Activated T-helper 1 cell treated with anti-CD3 and anti-CD28 coated beads, Interleukin-12 subunit alpha, Interleukin-12 subunit beta, Interleukin-2, Interleukin-4 antibody, amounts not matched to agents 30 ng/mL and 10 ng/mL and 1 ng/mL, durations not matched to agents 14 hours and 24 hours and 36 hours (primary cell): ENCODE measurements at regions of chr10 and their contacts with region 1.

Region 1: DNA sequence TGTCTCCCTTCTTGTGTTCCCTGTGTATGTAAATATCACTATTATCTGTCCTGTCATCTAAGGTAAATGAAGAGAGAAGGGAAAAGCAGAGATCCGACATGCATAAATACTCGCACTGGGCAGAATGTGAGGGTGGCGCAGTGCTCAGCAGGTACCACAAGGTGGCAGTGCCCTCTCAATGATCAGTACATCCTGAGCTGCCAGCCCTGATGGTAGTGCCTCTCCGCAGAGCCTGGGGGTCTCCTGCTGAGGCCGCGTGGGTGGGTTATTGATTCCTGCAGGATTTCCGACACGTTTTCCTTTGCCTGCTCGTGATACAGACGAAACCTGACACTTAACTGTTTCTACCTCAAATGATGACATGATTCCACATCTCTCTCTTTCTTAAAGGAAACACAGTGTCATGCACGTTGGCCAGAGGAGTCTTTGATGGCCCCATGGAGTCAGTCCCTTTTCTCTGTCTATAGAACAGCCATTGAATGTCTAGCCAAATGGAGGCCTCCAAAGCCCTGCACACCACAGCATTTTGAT is 19.8 kb downstream of the RGR start:
- DNase-seq: peak; percentile 53
- H3K4me3 Mint-ChIP-seq: no peak overlapping the region
- H3K27ac Mint-ChIP-seq: no peak overlapping the region
- H3K4me1 Mint-ChIP-seq: peaks cover 20% of the 10 kb centered on the region
- H3K27me3 Mint-ChIP-seq: peaks cover 17% of the 10 kb centered on the region

Region 2: GRCh38 chr10:84294766-84295447 is 30.2 kb after region 1 on chr10:
- intact Hi-C with region 1: loop called (anchors 1 kb)
- DNase-seq: no peak
- H3K4me3 Mint-ChIP-seq: no peak overlapping the region
- H3K27ac Mint-ChIP-seq: no peak overlapping the region
- H3K4me1 Mint-ChIP-seq: peaks cover 22% of the 10 kb centered on the region
- H3K27me3 Mint-ChIP-seq: peaks cover 4% of the 10 kb centered on the region

Region 3: GRCh38 chr10:84328418-84329195 is 63.9 kb after region 1 on chr10 and contains the start of gene CCSER2:
- intact Hi-C with region 1: loop called (anchors 2 kb)
- DNase-seq: peak; percentile 88
- H3K4me3 Mint-ChIP-seq: peak within 1 kb of the TSS; percentile 95
- H3K27ac Mint-ChIP-seq: peak within 1 kb of the TSS; percentile 99
- H3K4me1 Mint-ChIP-seq: peaks cover 39% of the 10 kb centered on the region
- H3K27me3 Mint-ChIP-seq: no peaks in the 10 kb centered on the region
- total RNA-seq, gene CCSER2: 52.3 and 53.6 TPM in 2 replicates

Region 4: GRCh38 chr10:84352251-84352842 is 87.7 kb after region 1 on chr10:
- intact Hi-C with region 1: loop called (anchors 1 kb)
- DNase-seq: peak; percentile 49
- H3K4me3 Mint-ChIP-seq: no peak overlapping the region
- H3K27ac Mint-ChIP-seq: no peak overlapping the region
- H3K4me1 Mint-ChIP-seq: peaks cover 65% of the 10 kb centered on the region
- H3K27me3 Mint-ChIP-seq: no peaks in the 10 kb centered on the region

Region 5: GRCh38 chr10:84429926-84430520 is 165.3 kb after region 1 on chr10:
- intact Hi-C with region 1: loop called (anchors 1 kb)
- DNase-seq: peak; percentile 29
- H3K4me3 Mint-ChIP-seq: no peak overlapping the region
- H3K27ac Mint-ChIP-seq: no peak overlapping the region
- H3K4me1 Mint-ChIP-seq: peaks cover 14% of the 10 kb centered on the region
- H3K27me3 Mint-ChIP-seq: no peaks in the 10 kb centered on the region

Region 6: GRCh38 chr10:84715911-84716310 is 451.2 kb after region 1 on chr10:
- intact Hi-C with region 1: loop called (anchors 10 kb)
- DNase-seq: no peak
- H3K4me3 Mint-ChIP-seq: no peak overlapping the region
- H3K27ac Mint-ChIP-seq: no peak overlapping the region
- H3K4me1 Mint-ChIP-seq: no peaks in the 10 kb centered on the region
- H3K27me3 Mint-ChIP-seq: peaks cover under 1% of the 10 kb centered on the region